ENCODE measurements at regions of chr3 and their contacts with region 1.

Region 1: DNA sequence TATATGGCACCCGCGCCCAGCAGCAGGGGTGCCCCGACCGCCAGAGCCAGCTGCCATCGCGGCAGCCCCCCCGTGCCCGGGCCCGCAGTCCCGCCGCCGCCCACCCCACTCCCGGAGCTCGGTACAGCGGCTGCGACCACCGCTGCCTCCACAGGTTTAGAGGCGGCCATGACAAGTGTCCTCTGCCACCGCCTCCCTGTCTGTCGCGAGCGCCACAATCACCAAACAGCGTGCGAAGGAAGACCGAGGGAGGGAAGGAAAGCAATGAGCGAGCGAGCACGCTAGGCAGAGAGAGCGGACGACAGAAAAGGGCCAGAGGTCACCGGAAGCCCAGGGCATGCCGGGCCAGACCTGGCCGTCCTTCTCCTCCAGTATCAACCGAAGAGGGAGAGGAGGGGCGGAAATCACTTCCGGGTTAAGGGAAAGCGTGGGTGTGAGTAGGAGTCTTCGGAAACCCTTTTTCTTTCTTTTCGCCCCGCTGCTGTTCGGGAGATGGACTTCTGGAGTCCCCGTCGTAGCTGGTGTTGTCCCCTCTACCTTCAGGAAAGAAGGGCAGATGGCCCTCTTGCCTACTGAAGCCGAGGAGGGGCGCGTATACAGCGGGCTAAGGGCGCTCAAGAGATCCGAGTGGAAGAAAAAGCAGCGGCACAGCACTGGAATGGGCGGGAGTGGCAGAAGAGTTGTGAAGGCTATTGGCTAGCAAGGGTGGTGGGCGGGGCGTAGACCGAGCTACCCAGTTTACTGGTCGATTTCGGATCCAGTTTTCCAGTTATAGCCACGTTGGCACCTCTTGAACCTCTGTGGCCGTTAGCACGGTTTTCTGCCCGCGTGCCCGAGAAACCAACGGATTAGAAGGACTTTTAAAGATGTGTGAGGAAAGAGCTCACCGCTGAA is at the starts of genes LNP1 and TOMM70:
- DNase-seq: peak; percentile 83 to 95 (median 94)
- ATAC-seq: peak; percentile 93
- H3K4me3 ChIP-seq: peak within 1 kb of the TSS; percentile 90
- H3K4me3 Mint-ChIP-seq: peak within 1 kb of the TSS; percentile 87 to 99 (median 96)
- H3K27ac ChIP-seq: peak within 1 kb of the TSS; percentile 85
- H3K27ac Mint-ChIP-seq: peak within 1 kb of the TSS; percentile 90 to 98 (median 95)
- H3K4me1 ChIP-seq: peaks cover 21 to 34% of the 10 kb centered on the region in 2 donors
- H3K4me1 Mint-ChIP-seq: peaks cover 36 to 90% (median 77%) of the 10 kb centered on the region in 7 donors
- H3K27me3 ChIP-seq: no peaks in the 10 kb centered on the region
- H3K27me3 Mint-ChIP-seq: no peaks in the 10 kb centered on the region
- total RNA-seq, gene LNP1: 0.82 to 2.4 (median 1.6) TPM
- total RNA-seq, gene TOMM70: 18.3 to 43.7 (median 35.5) TPM

Region 2: DNA sequence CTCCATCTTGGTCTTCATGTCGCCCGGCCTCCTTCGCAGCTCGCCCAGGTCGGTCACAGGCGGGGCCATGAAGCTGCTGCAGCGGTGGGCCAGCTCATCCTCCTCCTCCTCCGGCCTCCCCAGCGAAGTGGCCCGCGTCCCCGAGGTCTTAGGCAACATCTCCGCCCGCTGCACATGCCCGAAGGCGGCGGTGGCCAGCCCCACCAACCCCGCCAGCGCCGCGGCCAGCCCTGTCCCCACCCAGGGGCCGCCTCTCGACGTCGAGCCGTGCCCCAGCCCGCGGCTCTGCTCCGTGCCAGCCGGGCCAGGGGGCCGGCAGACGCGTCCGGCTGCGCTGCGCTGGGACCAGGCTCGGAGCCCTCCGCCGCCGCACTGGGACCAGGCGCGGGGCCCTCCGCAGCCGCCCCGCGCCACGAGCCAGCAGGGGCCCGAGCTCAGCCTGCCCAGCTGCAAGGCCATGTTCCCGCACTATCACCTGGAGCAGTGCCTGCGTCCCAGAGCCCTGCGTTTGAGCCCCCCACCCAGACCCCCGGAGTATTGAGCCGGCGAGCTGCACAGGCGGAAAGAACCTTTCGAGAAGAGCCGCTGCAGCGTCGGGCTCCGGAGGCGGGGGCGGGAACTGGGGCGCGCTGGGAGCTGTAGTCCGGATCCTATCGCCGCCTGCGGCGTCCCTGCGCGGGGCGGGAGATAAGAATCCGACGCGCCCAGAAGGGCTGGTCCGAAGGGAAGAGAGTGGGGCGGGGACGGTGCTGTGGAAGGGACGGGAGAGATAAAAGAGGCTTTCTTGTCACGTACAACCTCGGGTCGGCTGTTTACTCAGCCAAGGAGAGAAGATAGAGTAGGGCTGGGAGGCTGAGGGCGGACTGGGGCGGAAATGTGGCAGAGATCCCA is 1807.7 kb before region 1 on chr3 and contains the start of gene CPOX:
- CTCF ChIA-PET with region 1: no interaction called
- POLR2A ChIA-PET with region 1: interaction called, 4 read pairs
- intact Hi-C with region 1: loop called in 1 of 2 experiments (anchors 1 kb)
- DNase-seq: peak; percentile 62 to 85 (median 73)
- ATAC-seq: peak; percentile 95
- H3K4me3 ChIP-seq: peak within 1 kb of the TSS; percentile 85
- H3K4me3 Mint-ChIP-seq: peak within 1 kb of the TSS; percentile 91 to 99 (median 98)
- H3K27ac ChIP-seq: peak within 1 kb of the TSS; percentile 69
- H3K27ac Mint-ChIP-seq: peak within 1 kb of the TSS; percentile 87 to 98 (median 95)
- H3K4me1 ChIP-seq: peaks cover 11% of the 10 kb centered on the region in 2 donors
- H3K4me1 Mint-ChIP-seq: peaks cover 30 to 52% (median 40%) of the 10 kb centered on the region in 7 donors
- H3K27me3 ChIP-seq: no peaks in the 10 kb centered on the region
- H3K27me3 Mint-ChIP-seq: no peaks in the 10 kb centered on the region
- total RNA-seq, gene CPOX: 11.4 to 67.5 (median 21.6) TPM

Region 3: GRCh38 chr3:100073899-100074307 is 327.1 kb before region 1 on chr3:
- CTCF ChIA-PET with region 1: no interaction called
- POLR2A ChIA-PET with region 1: no interaction called
- intact Hi-C with region 1: loop called in 1 of 2 experiments (anchors 2 kb)
- DNase-seq: peak in 2 of 9 donors; percentile 5 to 32
- ATAC-seq: no peak
- H3K4me3 ChIP-seq: peak overlapping the region; percentile 8
- H3K4me3 Mint-ChIP-seq: peak overlapping the region; percentile 54 to 82 (median 76)
- H3K27ac ChIP-seq: no peak overlapping the region
- H3K27ac Mint-ChIP-seq: peak overlapping the region in 4 of 9 donors; percentile 10 to 92 (median 38)
- H3K4me1 ChIP-seq: peaks cover 16 to 31% of the 10 kb centered on the region in 2 donors
- H3K4me1 Mint-ChIP-seq: peaks cover 32 to 68% (median 57%) of the 10 kb centered on the region in 7 donors
- H3K27me3 ChIP-seq: no peaks in the 10 kb centered on the region
- H3K27me3 Mint-ChIP-seq: no peaks in the 10 kb centered on the region

Region 4: DNA sequence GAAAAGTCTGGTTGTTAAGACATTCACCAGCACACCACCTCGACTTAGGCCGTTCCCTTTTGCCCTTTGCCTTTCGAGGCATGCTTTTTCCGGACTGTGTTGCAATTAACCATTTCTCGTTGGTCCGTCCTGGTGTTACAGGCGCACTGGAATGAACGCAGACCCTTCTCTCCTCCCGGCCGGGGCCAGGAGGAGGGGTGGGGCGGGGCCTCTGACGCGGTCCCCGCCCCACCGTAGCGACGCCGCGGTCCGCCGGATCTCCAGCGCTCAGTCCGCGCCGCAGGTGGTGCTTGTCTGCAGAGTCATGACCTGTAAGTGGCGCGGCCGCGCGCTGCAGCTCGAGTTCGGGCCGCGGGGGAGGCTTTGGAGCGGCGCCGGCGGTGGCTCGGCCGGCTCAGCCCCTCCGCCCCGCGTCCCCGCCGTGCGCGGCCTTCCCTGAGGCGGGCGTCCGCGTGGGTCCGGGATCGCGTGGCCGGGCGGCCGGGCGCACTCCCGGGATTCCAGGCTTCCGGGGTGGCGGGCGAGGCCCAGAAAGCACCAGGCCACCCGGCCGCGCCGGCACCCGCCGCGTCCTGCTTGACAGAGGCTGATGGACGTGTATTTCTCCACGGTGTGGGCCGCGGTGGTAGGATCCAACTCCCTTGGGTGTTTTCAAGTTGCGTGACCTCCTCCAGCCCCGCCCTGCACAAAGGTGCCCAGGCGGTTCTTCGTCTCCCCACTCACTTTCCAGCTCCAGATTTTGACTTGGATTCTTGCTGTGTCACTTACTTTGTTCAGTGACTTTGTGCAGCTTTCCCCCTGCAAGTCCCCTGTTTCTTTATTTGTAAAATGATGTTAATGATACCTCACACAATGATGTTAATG is 66.3 kb before region 1 on chr3 and contains the start of gene NIT2:
- CTCF ChIA-PET with region 1: no interaction called
- POLR2A ChIA-PET with region 1: interaction called, 21 read pairs
- intact Hi-C with region 1: loop called (anchors 1 kb)
- DNase-seq: peak; percentile 49 to 79 (median 65)
- ATAC-seq: peak; percentile 97
- H3K4me3 ChIP-seq: peak within 1 kb of the TSS; percentile 72
- H3K4me3 Mint-ChIP-seq: peak within 1 kb of the TSS; percentile 86 to 99 (median 94)
- H3K27ac ChIP-seq: peak within 1 kb of the TSS; percentile 76
- H3K27ac Mint-ChIP-seq: peak within 1 kb of the TSS; percentile 87 to 97 (median 93)
- H3K4me1 ChIP-seq: peaks cover 8 to 12% of the 10 kb centered on the region in 2 donors
- H3K4me1 Mint-ChIP-seq: peaks cover 11 to 40% (median 30%) of the 10 kb centered on the region in 7 donors
- H3K27me3 ChIP-seq: no peaks in the 10 kb centered on the region
- H3K27me3 Mint-ChIP-seq: no peaks in the 10 kb centered on the region
- total RNA-seq, gene NIT2: 25.3 to 51.6 (median 30.6) TPM

Region 5: DNA sequence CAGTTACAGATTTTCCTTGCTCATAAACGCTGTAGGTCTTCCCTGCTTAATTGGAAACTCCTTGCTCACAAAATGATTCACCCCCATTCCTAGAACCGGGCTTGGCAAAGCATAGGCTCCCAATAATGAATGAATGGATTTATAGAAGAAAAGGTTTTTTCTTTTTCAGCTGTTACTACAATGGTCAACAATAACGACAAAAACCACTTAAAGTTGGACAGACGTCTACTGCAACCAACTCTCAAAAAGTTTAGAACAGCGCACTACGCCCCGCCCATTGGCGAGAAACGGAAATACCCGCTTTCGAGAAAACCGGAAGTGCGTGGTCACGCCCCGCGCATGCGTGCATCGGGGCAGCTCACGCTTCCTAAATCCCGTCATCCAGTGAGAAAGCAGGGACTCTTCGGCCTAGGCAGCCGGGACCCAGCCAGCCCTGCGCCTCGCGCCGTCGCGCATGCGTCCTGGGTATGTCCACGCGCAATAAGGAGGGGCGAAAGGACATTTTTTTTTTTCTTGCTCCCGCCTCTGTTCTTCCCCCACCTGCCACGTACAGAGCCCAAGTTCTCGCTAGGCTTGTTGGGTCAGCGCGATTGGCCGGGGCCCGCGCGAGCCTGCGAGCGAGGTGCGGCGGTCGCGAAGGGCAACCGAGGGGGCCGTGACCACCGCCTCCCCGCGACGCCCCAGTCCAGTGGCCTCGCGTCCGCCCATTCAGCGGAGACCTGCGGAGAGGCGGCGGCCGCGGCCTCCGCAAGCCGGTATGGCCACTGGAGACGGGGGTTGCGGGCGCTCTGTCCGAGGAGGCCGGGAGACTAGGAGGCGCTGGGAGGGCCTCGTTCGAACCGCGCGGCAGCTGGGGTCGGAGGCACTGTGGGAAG is 308.2 kb after region 1 on chr3 and contains the start of gene TFG:
- CTCF ChIA-PET with region 1: no interaction called
- POLR2A ChIA-PET with region 1: interaction called, 7 read pairs
- intact Hi-C with region 1: loop called (anchors 1 kb)
- DNase-seq: peak; percentile 94 to 98 (median 96)
- ATAC-seq: peak; percentile 95
- H3K4me3 ChIP-seq: peak within 1 kb of the TSS; percentile 68
- H3K4me3 Mint-ChIP-seq: peak within 1 kb of the TSS; percentile 85 to 98 (median 94)
- H3K27ac ChIP-seq: peak within 1 kb of the TSS; percentile 90
- H3K27ac Mint-ChIP-seq: peak within 1 kb of the TSS; percentile 95 to 99 (median 98)
- H3K4me1 ChIP-seq: peaks cover 19 to 21% of the 10 kb centered on the region in 2 donors
- H3K4me1 Mint-ChIP-seq: peaks cover 32 to 50% (median 47%) of the 10 kb centered on the region in 7 donors
- H3K27me3 ChIP-seq: no peaks in the 10 kb centered on the region
- H3K27me3 Mint-ChIP-seq: peaks cover 0 to 14% (median 6%) of the 10 kb centered on the region in 5 donors
- total RNA-seq, gene TFG: 40.8 to 72.2 (median 45.6) TPM

Region 6: DNA sequence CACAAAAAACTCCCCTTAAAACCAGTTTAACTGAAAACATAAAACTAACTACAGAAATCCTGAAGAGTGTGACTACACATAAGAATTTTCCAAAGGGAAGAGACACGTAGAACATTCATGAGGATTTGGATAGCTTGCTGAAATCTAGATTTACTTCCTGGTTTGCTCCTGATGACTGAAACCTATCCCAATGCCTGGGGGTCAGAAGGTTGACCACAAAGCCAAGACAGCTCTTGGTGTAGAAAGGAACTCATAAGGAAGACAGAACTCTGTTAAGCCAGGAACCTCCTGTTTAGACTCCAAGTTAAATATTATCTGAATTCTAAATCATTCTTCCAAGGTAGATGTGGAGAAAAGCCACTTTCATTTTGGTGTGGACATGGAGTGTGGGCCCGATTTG is 401.1 kb after region 1 on chr3:
- CTCF ChIA-PET with region 1: no interaction called
- POLR2A ChIA-PET with region 1: no interaction called
- intact Hi-C with region 1: no loop called
- DNase-seq: no peak
- ATAC-seq: no peak
- H3K4me3 ChIP-seq: no peak overlapping the region
- H3K4me3 Mint-ChIP-seq: no peak overlapping the region
- H3K27ac ChIP-seq: no peak overlapping the region
- H3K27ac Mint-ChIP-seq: no peak overlapping the region
- H3K4me1 ChIP-seq: no peaks in the 10 kb centered on the region
- H3K4me1 Mint-ChIP-seq: no peaks in the 10 kb centered on the region
- H3K27me3 ChIP-seq: peaks cover 0 to 2% of the 10 kb centered on the region in 2 donors
- H3K27me3 Mint-ChIP-seq: peaks cover 0 to 27% (median 12%) of the 10 kb centered on the region in 5 donors

Region 7: GRCh38 chr3:101676765-101677435 is 1275.9 kb after region 1 on chr3 and contains the start of gene ZBTB11:
- CTCF ChIA-PET with region 1: no interaction called
- POLR2A ChIA-PET with region 1: no interaction called
- intact Hi-C with region 1: loop called (anchors 1 kb)
- DNase-seq: peak; percentile 98 to 100 (median 99)
- ATAC-seq: peak; percentile 80
- H3K4me3 ChIP-seq: peak within 1 kb of the TSS; percentile 91
- H3K4me3 Mint-ChIP-seq: peak within 1 kb of the TSS; percentile 87 to 97 (median 93)
- H3K27ac ChIP-seq: peak within 1 kb of the TSS; percentile 98
- H3K27ac Mint-ChIP-seq: peak within 1 kb of the TSS; percentile 93 to 100 (median 97)
- H3K4me1 ChIP-seq: peaks cover 23 to 26% of the 10 kb centered on the region in 2 donors
- H3K4me1 Mint-ChIP-seq: peaks cover 19 to 63% (median 54%) of the 10 kb centered on the region in 7 donors
- H3K27me3 ChIP-seq: no peaks in the 10 kb centered on the region
- H3K27me3 Mint-ChIP-seq: no peaks in the 10 kb centered on the region
- total RNA-seq, gene ZBTB11: 31.9 to 68.2 (median 54.2) TPM